ENCODE measurements at regions of chr1 and their contacts with region 1.

Region 1: GRCh38 chr1:42484382-42484781 is 21.3 kb downstream of the CCDC30 start:
- DNase-seq: no peak
- H3K4me3 Mint-ChIP-seq: no peak overlapping the region
- H3K27ac Mint-ChIP-seq: no peak overlapping the region
- H3K4me1 Mint-ChIP-seq: no peaks in the 10 kb centered on the region
- H3K27me3 Mint-ChIP-seq: no peaks in the 10 kb centered on the region
- CTCF ChIP-seq: no peak

Region 2: DNA sequence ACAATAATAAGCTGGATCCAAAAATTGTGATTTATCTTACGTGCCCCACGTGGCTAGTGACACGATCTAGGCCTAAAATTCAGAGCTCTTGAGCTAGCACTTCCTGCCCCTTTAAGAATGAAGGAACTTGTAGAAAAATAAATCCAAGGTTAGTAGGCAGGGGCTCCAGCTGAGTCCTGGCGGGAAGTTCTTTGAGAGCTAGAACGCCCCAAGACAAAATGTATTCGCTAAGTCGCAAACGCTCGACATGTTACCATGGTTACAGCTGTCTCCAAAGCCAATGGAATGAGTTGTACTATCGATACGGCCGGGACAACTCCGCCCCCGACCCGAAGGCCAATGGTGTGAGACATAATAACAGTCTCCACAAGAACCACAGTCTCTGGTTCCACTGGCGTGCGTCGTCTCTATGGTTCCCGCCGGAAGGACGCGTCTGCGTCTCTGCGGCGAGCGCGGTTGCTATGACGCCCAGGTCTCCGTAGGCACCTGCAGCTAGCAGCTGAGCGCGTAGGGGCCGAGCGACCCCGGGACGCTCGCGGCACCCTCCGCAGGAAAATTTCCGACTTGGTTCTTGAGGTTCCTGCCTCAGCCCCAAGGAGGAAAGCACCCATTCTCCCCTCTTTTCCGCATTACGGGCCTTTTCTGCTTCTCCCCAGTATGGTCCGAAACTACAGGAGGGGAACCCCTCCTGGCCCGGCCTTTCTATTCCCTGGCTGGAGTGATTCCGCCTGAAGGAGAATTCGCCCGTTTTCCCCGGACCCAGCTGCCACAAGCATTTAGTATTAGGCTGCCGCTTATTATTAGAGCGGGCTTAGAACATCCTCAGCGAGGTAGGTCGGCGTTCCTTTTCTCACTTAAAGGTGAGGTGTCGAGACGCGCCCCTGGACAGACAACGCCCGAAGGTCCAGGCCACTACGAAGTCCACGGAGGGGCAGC is 21.3 kb before region 1 on chr1 and contains the start of gene CCDC30:
- CTCF ChIA-PET with region 1: interaction called, 10 read pairs
- intact Hi-C with region 1: no loop called
- DNase-seq: peak; percentile 96
- H3K4me3 Mint-ChIP-seq: peak within 1 kb of the TSS; percentile 86
- H3K27ac Mint-ChIP-seq: peak within 1 kb of the TSS; percentile 32
- H3K4me1 Mint-ChIP-seq: peaks cover 25% of the 10 kb centered on the region
- H3K27me3 Mint-ChIP-seq: no peaks in the 10 kb centered on the region
- CTCF ChIP-seq: no peak
- total RNA-seq, gene CCDC30: 4.4 and 5.1 TPM in 2 replicates

Region 3: GRCh38 chr1:42700006-42700405 is 215.6 kb after region 1 on chr1:
- CTCF ChIA-PET with region 1: no interaction called
- intact Hi-C with region 1: no loop called
- DNase-seq: no peak
- H3K4me3 Mint-ChIP-seq: no peak overlapping the region
- H3K27ac Mint-ChIP-seq: peak overlapping the region; percentile 37
- H3K4me1 Mint-ChIP-seq: peaks cover 22% of the 10 kb centered on the region
- H3K27me3 Mint-ChIP-seq: no peaks in the 10 kb centered on the region
- CTCF ChIP-seq: no peak

Region 4: GRCh38 chr1:43334453-43335205 is 850.2 kb after region 1 on chr1:
- CTCF ChIA-PET with region 1: no interaction called
- intact Hi-C with region 1: no loop called
- DNase-seq: no peak
- H3K4me3 Mint-ChIP-seq: no peak overlapping the region
- H3K27ac Mint-ChIP-seq: no peak overlapping the region
- H3K4me1 Mint-ChIP-seq: peaks cover 6% of the 10 kb centered on the region
- H3K27me3 Mint-ChIP-seq: peaks cover 18% of the 10 kb centered on the region
- CTCF ChIP-seq: no peak